Dorsolateral prefrontal cortex (tissue), 120 donors: ENCODE measurements at regions of chr16 and their contacts with region 1.

Region 1: DNA sequence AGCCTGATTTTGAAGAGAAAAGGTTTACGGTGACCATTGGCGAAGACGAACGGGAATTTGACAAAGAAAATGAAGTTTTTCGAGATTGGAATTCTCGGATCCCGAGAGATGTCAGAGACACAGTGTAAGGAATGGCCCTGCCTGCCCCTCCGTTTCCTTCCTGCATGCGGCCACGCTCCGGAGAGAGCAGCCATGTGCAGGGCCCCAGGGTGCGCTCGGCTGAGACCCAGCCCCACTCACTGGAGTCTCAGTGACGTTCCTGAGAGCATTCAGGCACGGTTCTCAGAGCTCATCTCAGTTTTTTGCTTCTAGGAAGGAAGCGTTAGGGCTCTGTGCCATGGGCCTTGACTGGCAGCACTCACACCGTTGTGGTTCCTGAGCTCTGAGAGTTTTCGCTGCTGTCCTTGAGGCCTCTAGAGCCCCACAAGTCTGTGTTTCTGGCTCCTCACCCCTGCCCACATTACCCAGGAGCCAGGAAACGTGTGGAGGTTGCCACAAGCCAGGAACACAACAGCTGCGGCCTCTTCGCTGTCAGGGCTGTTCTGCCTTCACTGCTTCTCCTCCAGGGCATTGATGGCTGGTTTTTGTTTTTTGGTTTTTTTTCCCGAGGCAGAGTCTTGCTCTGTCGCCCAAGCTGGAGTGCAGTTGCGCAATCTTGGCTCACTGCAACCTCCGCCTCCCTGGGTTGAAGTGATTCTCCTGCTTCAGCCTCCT is 29.8 kb downstream of the ZC3H18 start:
- DNase-seq: no peak
- H3K4me3 ChIP-seq: no peak overlapping the region
- H3K27ac ChIP-seq: peak overlapping the region in 50 of 59 donors; percentile 6 to 93 (median 65)
- H3K27me3 ChIP-seq: no peaks in the 10 kb centered on the region
- CTCF ChIP-seq: no peak

Region 2: DNA sequence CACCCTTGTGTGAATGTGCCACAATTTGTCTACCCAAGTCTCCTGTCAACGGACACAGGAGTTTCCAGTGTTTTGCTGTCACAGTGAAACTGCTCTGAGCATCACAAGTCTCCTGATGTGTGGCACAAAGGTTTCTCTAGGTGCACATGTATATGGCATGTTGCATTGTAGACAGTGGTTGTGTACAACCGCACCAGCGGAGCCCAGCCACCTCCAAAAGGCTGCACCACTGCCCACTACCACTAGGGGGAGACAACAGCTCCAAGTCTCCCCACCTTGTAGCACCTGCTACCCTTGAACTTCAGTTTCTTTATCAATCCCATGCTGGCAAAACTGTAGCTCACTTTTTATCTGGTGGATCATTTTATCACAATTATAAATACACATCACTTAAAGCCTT is 312.8 kb before region 1 on chr16:
- intact Hi-C with region 1: no loop called
- DNase-seq: no peak
- H3K4me3 ChIP-seq: no peak overlapping the region
- H3K27ac ChIP-seq: no peak overlapping the region
- H3K27me3 ChIP-seq: peaks cover 0 to 6% (median 0%) of the 10 kb centered on the region in 45 donors
- CTCF ChIP-seq: peak in 19 of 56 donors; percentile 7 to 69 (median 25)

Region 3: GRCh38 chr16:88655053-88655732 is 55.2 kb after region 1 on chr16:
- intact Hi-C with region 1: loop called in 1 of 2 experiments (anchors 5 kb)
- DNase-seq: no peak
- H3K4me3 ChIP-seq: no peak overlapping the region
- H3K27ac ChIP-seq: no peak overlapping the region
- H3K27me3 ChIP-seq: no peaks in the 10 kb centered on the region
- CTCF ChIP-seq: no peak